HEK293 (cell line): ENCODE measurements at regions of chr17 and their contacts with region 1.

Region 1: DNA sequence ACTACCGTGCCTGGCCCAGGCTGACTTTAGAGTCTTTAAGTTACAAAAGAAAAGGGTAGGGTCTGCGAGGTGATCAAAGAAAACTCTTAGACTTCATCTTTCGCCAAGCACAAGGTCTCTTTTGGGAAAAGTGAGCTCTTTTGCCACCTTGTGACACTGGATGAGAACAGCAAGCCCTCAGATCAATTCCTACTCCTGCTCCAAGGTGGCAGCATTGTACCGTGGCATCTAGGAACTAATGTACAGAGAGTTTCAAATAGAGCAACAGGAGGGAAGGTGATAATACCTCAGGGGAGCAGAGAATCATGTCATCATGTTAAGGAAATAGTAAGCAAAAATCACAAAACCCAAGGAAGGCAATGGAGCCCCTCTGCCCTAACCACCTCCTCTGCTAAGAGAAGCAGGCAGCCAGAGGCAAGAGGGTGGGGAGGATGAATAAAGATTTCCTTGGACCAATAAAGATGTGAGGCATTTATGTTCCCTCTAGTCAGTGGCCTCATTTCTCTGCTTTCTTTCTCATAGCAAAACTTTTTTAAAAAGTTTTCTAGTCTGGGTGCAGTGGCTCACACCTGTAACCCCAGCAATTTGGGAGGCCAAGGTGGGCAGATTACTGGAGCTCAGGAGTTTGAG is 2.1 kb upstream of the C17orf78 start:
- H3K4me3 ChIP-seq: no peak overlapping the region
- H3K27ac ChIP-seq: 0 out of 2 replicates have a peak overlapping the region, but pooled peaks have one; percentile 30
- H3K4me1 ChIP-seq: no peaks in the 10 kb centered on the region; the same call in 1 of the 2 replicates
- CTCF ChIP-seq: peak; percentile 99

Region 2: GRCh38 chr17:36623281-36623680 is 750.4 kb before region 1 on chr17:
- CTCF ChIA-PET with region 1: interaction called, 12 read pairs
- POLR2A ChIA-PET with region 1: no interaction called
- H3K4me3 ChIP-seq: no peak overlapping the region
- H3K27ac ChIP-seq: no peak overlapping the region
- H3K4me1 ChIP-seq: no peaks in the 10 kb centered on the region
- CTCF ChIP-seq: no peak

Region 3: GRCh38 chr17:37358830-37359681 is 14.6 kb before region 1 on chr17:
- CTCF ChIA-PET with region 1: interaction called, 41 read pairs
- POLR2A ChIA-PET with region 1: interaction called, 6 read pairs
- H3K4me3 ChIP-seq: peak overlapping the region; percentile 66
- H3K27ac ChIP-seq: peak overlapping the region; percentile 87
- H3K4me1 ChIP-seq: peaks cover 7% of the 10 kb centered on the region
- CTCF ChIP-seq: no peak

Region 4: GRCh38 chr17:37392024-37392590 is 18.5 kb after region 1 on chr17:
- CTCF ChIA-PET with region 1: interaction called, 141 read pairs
- POLR2A ChIA-PET with region 1: interaction called, 3 read pairs
- H3K4me3 ChIP-seq: no peak overlapping the region
- H3K27ac ChIP-seq: no peak overlapping the region
- H3K4me1 ChIP-seq: peaks cover 13% of the 10 kb centered on the region
- CTCF ChIP-seq: no peak

Region 5: DNA sequence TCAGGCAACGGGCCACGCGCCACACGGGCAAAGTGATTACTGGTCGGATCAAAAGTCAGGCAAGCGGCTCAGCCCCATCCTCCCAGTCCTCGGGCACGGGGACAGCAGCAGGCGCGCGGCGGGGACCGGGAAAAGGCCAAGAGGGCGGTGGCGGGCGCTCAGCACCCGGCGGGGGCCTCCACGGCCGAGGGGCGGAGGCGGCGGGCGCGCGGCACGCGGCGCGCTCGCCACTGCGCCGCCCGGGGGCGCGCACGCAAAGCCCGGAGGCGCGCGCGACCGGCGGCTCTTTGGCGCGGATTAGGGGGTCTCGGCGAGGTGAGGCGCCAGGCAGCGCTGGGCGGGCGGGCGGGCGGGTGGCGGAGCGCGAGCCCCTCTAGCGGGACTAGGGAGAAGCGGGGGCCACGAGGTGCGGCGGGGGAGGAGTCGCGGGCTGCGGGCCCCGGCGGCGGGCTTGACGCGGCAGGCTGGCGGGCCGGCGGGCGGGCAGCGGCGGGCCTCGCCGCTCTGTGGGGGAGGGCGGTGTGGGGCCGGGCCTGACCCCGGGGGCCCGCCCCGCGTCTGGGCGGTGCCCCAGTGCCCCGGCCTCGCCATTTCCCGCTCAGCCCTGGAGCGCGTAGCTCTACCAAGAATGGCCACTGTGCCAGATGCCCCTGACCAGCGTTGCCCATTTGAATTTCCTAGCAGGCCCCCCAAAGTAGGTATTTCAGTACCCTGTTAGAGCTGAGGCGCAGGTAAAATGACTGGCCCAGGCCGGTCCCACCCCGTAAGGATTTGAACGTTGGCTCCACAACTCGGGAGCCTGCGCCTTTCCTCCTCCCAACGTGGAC is 33.2 kb after region 1 on chr17 and contains the starts of genes ACACA and TADA2A:
- CTCF ChIA-PET with region 1: interaction called, 19 read pairs
- POLR2A ChIA-PET with region 1: interaction called, 8 read pairs
- H3K4me3 ChIP-seq: peak within 1 kb of the TSS; percentile 88
- H3K27ac ChIP-seq: peak within 1 kb of the TSS; percentile 88
- H3K4me1 ChIP-seq: peaks cover 5% of the 10 kb centered on the region
- CTCF ChIP-seq: 0 out of 2 replicates have a peak, but pooled peaks have one; percentile 23